Gastrocnemius medialis (tissue), 4 donors: ENCODE measurements at regions of chr14 and their contacts with region 1.

Region 1: DNA sequence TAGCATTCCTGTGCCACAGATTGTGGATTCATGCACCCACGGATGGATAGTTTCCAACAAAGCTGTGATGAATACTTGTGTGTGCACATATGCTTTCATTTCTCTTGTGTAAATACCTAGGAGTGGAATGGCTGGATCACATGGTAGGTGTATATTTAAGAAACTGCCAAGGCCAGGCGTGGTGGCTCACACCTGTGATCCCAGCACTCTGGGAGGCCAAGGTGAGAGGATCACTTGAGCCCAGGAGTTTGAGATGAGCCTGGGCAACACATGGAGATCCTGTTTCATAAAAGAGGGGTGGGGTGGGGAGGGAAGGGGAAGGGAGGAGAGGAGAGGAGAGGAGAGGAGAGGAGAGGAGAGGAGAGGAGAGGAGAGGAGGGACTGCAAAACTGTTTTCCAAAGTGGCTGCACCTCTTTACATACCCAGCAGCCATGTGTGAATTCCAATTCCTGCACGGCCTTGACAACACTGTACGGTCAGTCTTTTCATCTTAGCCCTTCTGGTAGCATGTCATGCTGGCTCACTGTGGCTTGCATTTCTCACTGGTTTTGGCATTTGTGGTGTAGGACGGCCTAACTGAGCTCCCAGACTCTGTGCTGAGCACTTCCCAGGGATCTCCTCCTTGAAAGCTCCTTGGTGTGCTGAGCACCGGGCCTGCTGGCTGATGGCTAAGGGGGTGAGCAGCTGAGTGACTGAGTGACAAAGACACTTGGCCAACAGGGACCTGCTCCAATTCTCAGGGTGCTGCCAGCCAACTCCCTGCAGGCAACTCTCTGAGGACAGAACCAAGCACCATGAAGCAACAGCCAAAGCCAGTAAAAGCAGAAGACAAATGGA is 27.9 kb downstream of the SYNE3 start:
- DNase-seq: peak; percentile 82 to 93
- ATAC-seq: peak; percentile 95 to 98
- H3K4me3 ChIP-seq: no peak overlapping the region
- H3K27ac ChIP-seq: peak overlapping the region; percentile 72 to 88 (median 78)
- H3K4me1 ChIP-seq: peaks cover 32 to 33% of the 10 kb centered on the region in 2 donors
- H3K27me3 ChIP-seq: no peaks in the 10 kb centered on the region
- CTCF ChIP-seq: no peak
- POLR2A ChIP-seq: no peak

Region 2: DNA sequence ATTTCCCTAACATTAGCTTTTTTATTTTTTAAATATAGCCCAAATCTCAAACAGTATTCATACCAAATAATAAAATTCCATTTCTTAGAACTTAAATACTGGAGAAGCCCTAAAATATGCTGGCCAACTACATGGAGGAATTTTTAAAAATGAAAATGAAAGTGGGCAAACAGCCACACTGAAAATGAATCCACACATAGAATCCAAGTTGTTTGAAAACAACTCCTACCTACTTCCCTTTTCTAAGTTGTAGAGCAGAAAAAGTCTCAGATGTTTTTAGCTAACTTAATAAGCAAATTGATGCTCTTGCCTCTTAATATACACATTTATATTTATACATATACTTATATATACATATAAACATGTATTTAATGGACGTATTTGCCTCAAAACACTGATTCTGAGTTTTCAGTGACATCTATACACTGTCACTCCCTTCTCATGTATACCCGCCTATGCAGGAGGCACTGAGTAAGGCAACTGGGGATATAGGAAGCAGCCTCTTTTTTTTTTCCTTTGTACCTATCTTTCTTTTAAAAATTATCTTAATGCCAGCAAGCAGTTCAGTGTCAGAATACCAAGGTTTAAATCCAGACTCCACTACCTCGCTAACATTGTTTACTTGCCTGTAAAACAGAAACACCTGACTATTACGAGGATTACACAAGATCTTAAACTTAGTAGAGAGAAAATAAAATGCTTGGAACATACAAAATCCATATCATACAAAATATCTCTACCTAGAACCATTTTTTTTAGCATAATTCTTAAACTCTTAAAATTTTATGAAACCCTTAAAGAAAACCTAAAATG is 344.6 kb before region 1 on chr14:
- in situ Hi-C with region 1: no loop called
- intact Hi-C with region 1: no loop called
- DNase-seq: no peak
- ATAC-seq: no peak
- H3K4me3 ChIP-seq: peak overlapping the region in 1 of 4 donors; percentile 1
- H3K27ac ChIP-seq: peak overlapping the region; percentile 36 to 67 (median 57)
- H3K4me1 ChIP-seq: peaks cover 54 to 56% of the 10 kb centered on the region in 2 donors
- H3K27me3 ChIP-seq: no peaks in the 10 kb centered on the region
- CTCF ChIP-seq: no peak
- POLR2A ChIP-seq: no peak

Region 3: GRCh38 chr14:95507701-95508103 is 19.1 kb after region 1 on chr14:
- in situ Hi-C with region 1: no loop called
- intact Hi-C with region 1: loop called (anchors 2 kb)
- DNase-seq: peak; percentile 48 to 76
- ATAC-seq: peak; percentile 55 to 69
- H3K4me3 ChIP-seq: no peak overlapping the region
- H3K27ac ChIP-seq: peak overlapping the region; percentile 74 to 84 (median 82)
- H3K4me1 ChIP-seq: peaks cover 63 to 72% of the 10 kb centered on the region in 2 donors
- H3K27me3 ChIP-seq: no peaks in the 10 kb centered on the region
- CTCF ChIP-seq: no peak
- POLR2A ChIP-seq: no peak